Heart right ventricle (tissue), 16 donors: ENCODE measurements at regions of chr11 and their contacts with region 1.

Region 1: DNA sequence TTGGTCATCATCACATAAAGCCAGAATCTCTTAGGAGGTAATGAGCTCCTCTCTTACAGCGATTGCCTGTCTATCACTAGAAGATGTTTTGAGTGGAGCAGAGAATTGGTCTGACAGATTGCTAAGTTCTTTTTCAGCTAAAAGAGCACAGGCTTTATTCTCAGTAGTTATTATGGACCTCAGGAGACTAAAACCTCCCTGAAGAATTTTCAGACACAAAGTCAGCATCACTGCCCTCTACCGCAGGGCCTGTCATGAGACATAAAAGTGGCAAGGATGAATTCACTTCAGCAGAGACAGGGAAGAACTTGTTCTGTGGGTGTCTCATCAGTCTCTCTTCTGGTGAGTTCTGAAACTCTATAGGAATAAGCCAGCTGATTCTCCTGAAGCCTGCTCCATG is at the start of gene OR51I2:
- DNase-seq: no peak
- ATAC-seq: no peak
- H3K4me3 ChIP-seq: no peak within 1 kb of the TSS
- H3K27ac ChIP-seq: no peak within 1 kb of the TSS
- H3K4me1 ChIP-seq: no peaks in the 10 kb centered on the region
- H3K27me3 ChIP-seq: no peaks in the 10 kb centered on the region
- CTCF ChIP-seq: no peak
- total RNA-seq, gene OR51I2: not detected

Region 2: GRCh38 chr11:5390210-5390609 is 58.8 kb before region 1 on chr11:
- intact Hi-C with region 1: no loop called
- DNase-seq: no peak
- ATAC-seq: no peak
- H3K4me3 ChIP-seq: no peak overlapping the region
- H3K27ac ChIP-seq: no peak overlapping the region
- H3K4me1 ChIP-seq: no peaks in the 10 kb centered on the region
- H3K27me3 ChIP-seq: no peaks in the 10 kb centered on the region
- CTCF ChIP-seq: no peak

Region 3: DNA sequence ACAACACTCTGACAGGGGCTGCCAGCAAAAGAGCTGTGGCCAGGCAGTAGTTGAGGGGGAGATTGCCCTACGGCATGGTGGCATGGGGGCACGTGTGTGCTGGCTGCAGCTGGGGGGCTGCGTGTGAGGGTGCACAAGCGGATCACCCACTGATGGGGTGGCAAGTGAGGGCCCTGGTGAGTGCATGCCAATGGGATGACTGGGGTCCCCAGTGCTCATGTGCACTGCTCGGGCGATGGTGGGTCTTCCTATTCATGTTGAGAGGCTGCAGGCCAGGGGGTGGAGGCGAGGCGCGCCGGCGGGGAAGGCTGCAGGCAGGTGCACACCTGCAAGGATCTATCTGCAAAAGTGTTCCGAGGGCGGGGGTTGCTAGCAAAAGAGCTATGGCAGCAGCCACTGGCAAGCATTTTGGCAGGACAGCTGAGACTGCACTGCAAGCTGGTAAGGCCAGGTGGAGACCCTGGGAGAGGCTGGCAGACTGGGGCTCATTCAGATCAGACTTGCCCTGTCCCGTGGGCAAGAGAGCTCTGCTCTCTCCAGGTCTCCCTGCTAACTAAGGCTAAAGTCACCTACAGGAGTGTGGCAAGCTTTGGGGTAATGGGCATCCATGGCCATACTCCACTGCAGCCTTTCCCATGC is 12.1 kb after region 1 on chr11:
- intact Hi-C with region 1: loop called in 1 of 10 experiments (anchors 2 kb)
- DNase-seq: no peak
- ATAC-seq: peak in 1 of 8 donors; percentile 34
- H3K4me3 ChIP-seq: no peak overlapping the region
- H3K27ac ChIP-seq: no peak overlapping the region
- H3K4me1 ChIP-seq: no peaks in the 10 kb centered on the region
- H3K27me3 ChIP-seq: no peaks in the 10 kb centered on the region
- CTCF ChIP-seq: no peak